ENCODE measurements at regions of chr1 and their contacts with region 1.

Region 1: GRCh38 chr1:39960431-39960958 is 5.5 kb downstream of the MFSD2A start:
- DNase-seq: peak; percentile 88
- ATAC-seq: peak; percentile 95
- H3K4me3 ChIP-seq: peak overlapping the region; percentile 6 to 34 (median 26)
- H3K4me3 Mint-ChIP-seq: peak overlapping the region; percentile 77
- H3K27ac ChIP-seq: peak overlapping the region; percentile 71 to 73
- H3K27ac Mint-ChIP-seq: peak overlapping the region; percentile 93
- H3K4me1 ChIP-seq: peaks cover 25 to 46% of the 10 kb centered on the region in 2 donors
- H3K4me1 Mint-ChIP-seq: peaks cover 47% of the 10 kb centered on the region
- H3K27me3 ChIP-seq: no peaks in the 10 kb centered on the region
- H3K27me3 Mint-ChIP-seq: no peaks in the 10 kb centered on the region
- CTCF ChIP-seq: no peak

Region 2: DNA sequence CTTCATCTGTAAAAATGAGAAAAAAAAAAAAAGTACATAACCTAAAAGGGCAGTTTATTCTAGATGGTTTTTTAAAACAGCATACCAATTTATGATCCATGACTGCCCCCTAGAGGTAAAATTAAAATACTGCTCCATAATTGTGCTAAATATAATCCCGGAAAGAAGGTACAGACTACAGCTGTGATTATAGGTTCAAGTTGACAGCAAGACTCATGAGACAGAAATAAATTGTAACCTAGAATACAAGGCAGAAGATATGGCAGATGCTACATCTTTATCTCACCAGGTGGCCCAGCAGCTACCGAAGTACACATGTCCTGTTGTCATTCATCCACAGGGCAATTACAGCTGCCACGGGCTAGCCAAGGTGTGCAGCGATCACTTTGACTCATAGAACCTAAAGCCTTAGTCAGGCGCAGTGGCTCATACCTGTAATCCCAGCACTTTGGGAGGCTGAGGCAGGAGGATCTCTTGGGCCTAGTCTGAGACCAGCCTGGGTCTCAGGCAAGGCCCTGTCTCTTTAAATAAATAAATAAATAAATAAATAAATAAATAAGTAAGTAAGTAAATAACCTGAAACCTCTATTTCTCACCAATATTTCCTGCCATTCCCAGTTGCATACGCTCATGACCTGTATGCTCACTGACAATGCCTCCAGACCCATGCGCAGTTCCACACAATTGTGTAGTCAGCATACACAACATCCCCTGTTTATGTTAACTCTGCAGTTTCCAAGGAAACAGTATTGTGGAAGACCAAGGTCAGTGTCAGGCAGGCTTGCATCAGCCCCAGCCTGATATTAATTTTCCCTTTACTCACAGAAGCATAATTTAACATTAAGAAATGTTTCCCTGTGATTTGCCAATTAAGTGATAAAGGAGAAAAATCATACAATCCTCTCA is 240.1 kb before region 1 on chr1:
- CTCF ChIA-PET with region 1: no interaction called
- POLR2A ChIA-PET with region 1: no interaction called
- intact Hi-C with region 1: no loop called
- DNase-seq: peak; percentile 76
- ATAC-seq: peak; percentile 65
- H3K4me3 ChIP-seq: no peak overlapping the region
- H3K4me3 Mint-ChIP-seq: no peak overlapping the region
- H3K27ac ChIP-seq: no peak overlapping the region
- H3K27ac Mint-ChIP-seq: no peak overlapping the region
- H3K4me1 ChIP-seq: no peaks in the 10 kb centered on the region
- H3K4me1 Mint-ChIP-seq: no peaks in the 10 kb centered on the region
- H3K27me3 ChIP-seq: peaks cover 0 to 13% (median 8%) of the 10 kb centered on the region in 4 experiments
- H3K27me3 Mint-ChIP-seq: peaks cover 39% of the 10 kb centered on the region
- CTCF ChIP-seq: peak; percentile 90

Region 3: DNA sequence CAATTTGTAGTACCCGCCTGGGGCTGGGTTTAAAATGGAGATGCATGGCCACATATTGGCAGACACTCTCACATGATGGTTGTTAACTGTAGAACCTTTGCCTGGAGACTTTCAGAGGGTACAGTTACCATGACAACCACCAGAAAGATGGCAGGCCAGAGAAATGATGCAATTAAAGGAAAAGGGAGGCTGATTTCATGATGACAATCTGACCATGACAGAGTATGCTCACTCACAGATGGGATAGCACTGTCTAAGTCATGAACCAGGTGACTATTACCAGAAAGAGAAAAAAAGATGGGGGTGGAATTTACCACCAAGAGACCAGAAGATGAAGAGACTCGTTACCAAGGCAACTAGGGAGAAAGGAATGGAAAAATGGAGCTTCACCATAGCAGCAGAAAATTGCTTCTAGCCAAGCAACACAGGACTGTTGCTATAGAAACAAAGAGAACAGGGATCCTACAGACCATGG is 73.7 kb before region 1 on chr1:
- CTCF ChIA-PET with region 1: no interaction called
- POLR2A ChIA-PET with region 1: no interaction called
- intact Hi-C with region 1: loop called (anchors 1 kb)
- DNase-seq: no peak
- ATAC-seq: no peak
- H3K4me3 ChIP-seq: no peak overlapping the region
- H3K4me3 Mint-ChIP-seq: no peak overlapping the region
- H3K27ac ChIP-seq: no peak overlapping the region
- H3K27ac Mint-ChIP-seq: no peak overlapping the region
- H3K4me1 ChIP-seq: peaks cover 10 to 11% of the 10 kb centered on the region in 2 donors
- H3K4me1 Mint-ChIP-seq: peaks cover 16% of the 10 kb centered on the region
- H3K27me3 ChIP-seq: no peaks in the 10 kb centered on the region
- H3K27me3 Mint-ChIP-seq: peaks cover 6% of the 10 kb centered on the region
- CTCF ChIP-seq: no peak

Region 4: GRCh38 chr1:39940980-39941871 is 19.3 kb before region 1 on chr1:
- CTCF ChIA-PET with region 1: no interaction called
- POLR2A ChIA-PET with region 1: no interaction called
- intact Hi-C with region 1: no loop called
- DNase-seq: no peak
- ATAC-seq: no peak
- H3K4me3 ChIP-seq: no peak overlapping the region
- H3K4me3 Mint-ChIP-seq: no peak overlapping the region
- H3K27ac ChIP-seq: no peak overlapping the region
- H3K27ac Mint-ChIP-seq: no peak overlapping the region
- H3K4me1 ChIP-seq: peaks cover 6 to 11% of the 10 kb centered on the region in 2 donors
- H3K4me1 Mint-ChIP-seq: peaks cover 9% of the 10 kb centered on the region
- H3K27me3 ChIP-seq: no peaks in the 10 kb centered on the region
- H3K27me3 Mint-ChIP-seq: peaks cover 4% of the 10 kb centered on the region
- CTCF ChIP-seq: no peak

Region 5: GRCh38 chr1:40011198-40011597 is 50.7 kb after region 1 on chr1:
- CTCF ChIA-PET with region 1: no interaction called
- POLR2A ChIA-PET with region 1: interaction called, 10 read pairs
- intact Hi-C with region 1: no loop called
- DNase-seq: no peak
- ATAC-seq: no peak
- H3K4me3 ChIP-seq: no peak overlapping the region
- H3K4me3 Mint-ChIP-seq: no peak overlapping the region
- H3K27ac ChIP-seq: no peak overlapping the region
- H3K27ac Mint-ChIP-seq: no peak overlapping the region
- H3K4me1 ChIP-seq: peaks cover 18 to 26% of the 10 kb centered on the region in 2 donors
- H3K4me1 Mint-ChIP-seq: peaks cover 35% of the 10 kb centered on the region
- H3K27me3 ChIP-seq: no peaks in the 10 kb centered on the region
- H3K27me3 Mint-ChIP-seq: no peaks in the 10 kb centered on the region
- CTCF ChIP-seq: no peak